Aorta (tissue), 5 donors: ENCODE measurements at regions of chr18 and their contacts with region 1.

Region 1: DNA sequence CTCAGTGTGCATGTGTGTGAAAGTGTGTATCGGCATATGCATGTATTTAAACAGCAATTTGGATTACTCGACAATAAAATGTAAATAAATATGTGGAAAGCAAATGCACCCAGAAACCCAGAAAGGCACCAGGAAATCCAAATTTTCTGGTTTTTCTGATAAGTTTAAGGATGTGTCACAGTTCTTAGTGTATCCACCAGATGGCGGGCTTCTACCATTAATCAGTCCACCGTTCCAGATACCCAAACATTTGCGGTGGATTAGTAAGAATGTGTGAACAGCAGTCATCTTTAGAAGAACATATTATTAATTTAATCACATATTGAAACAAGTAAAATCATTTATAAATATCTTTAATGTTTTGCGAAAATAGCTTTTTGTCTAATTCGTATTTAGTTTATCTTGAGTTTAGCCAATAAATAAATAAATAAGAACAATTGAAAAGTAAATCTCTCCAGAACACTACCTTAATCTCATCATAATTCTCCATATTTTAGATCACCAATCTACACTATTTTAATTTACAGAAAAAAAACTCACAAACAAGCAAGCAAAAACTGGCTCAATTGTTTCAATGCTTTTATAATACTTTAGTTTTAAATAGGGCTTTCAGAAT is 298.9 kb downstream of the DSEL start:
- DNase-seq: no peak
- ATAC-seq: peak; percentile 86
- H3K4me3 ChIP-seq: no peak overlapping the region
- H3K27ac ChIP-seq: no peak overlapping the region
- H3K4me1 ChIP-seq: no peaks in the 10 kb centered on the region
- H3K27me3 ChIP-seq: no peaks in the 10 kb centered on the region

Region 2: GRCh38 chr18:67199993-67200617 is 17.6 kb before region 1 on chr18:
- intact Hi-C with region 1: no loop called
- DNase-seq: no peak
- ATAC-seq: no peak
- H3K4me3 ChIP-seq: no peak overlapping the region
- H3K27ac ChIP-seq: no peak overlapping the region
- H3K4me1 ChIP-seq: no peaks in the 10 kb centered on the region
- H3K27me3 ChIP-seq: no peaks in the 10 kb centered on the region

Region 3: GRCh38 chr18:68623342-68623741 is 1405.7 kb after region 1 on chr18:
- intact Hi-C with region 1: loop called (anchors 5 kb)
- DNase-seq: peak in 1 of 2 donors; percentile 47
- ATAC-seq: peak; percentile 71
- H3K4me3 ChIP-seq: no peak overlapping the region
- H3K27ac ChIP-seq: no peak overlapping the region
- H3K4me1 ChIP-seq: no peaks in the 10 kb centered on the region
- H3K27me3 ChIP-seq: no peaks in the 10 kb centered on the region

Region 4: DNA sequence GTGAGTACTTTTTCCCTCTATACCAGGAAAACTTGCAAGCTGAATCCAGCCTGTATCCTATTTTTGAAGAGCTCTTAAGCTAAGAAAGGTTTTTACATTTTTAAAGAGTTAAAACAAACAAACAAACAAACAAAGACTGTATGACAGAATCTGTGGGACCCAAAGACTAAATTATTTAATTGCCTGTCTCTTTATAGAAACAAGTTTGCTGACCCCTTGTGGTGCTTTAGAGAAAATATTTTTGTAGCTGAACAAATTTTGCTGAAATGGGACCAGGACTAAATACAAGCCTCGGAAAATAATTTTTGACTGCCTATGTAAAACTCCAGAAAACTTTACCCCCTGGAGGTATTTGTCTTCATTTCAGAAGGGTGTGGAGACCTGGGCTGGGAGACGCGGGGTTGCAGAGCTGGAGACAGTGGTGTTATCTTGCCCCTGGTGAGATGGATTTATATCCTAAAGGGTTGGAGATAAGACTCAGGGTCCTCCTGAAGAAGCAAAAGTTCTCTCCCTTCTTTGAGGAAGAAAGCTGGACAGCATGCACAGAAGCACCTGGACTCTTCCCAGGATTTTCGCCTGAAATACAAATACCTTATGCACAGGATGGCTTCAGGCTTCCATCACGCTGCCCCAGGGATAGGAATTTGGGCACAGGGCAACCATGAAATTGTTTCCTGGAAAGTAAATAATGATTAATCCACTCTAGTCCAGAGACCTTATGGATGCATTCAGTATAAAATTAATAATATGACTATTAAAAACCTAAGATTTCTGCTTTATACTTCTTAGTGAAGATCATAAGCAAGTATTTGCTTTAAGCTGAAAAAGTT is 1442.9 kb after region 1 on chr18:
- intact Hi-C with region 1: loop called (anchors 5 to 10 kb)
- DNase-seq: no peak
- ATAC-seq: no peak
- H3K4me3 ChIP-seq: no peak overlapping the region
- H3K27ac ChIP-seq: no peak overlapping the region
- H3K4me1 ChIP-seq: peaks cover 0 to 1% of the 10 kb centered on the region in 2 donors
- H3K27me3 ChIP-seq: no peaks in the 10 kb centered on the region